GM18951 (cell line): ENCODE measurements at regions of chr16 and their contacts with region 1.

Region 1: GRCh38 chr16:75110637-75111513 is 5.7 kb downstream of the LDHD start:
- POLR2A ChIP-seq: no peak

Region 2: GRCh38 chr16:74709441-74709877 is 401.4 kb before region 1 on chr16:
- in situ Hi-C with region 1: loop called (anchors 25 kb)
- POLR2A ChIP-seq: no peak

Region 3: DNA sequence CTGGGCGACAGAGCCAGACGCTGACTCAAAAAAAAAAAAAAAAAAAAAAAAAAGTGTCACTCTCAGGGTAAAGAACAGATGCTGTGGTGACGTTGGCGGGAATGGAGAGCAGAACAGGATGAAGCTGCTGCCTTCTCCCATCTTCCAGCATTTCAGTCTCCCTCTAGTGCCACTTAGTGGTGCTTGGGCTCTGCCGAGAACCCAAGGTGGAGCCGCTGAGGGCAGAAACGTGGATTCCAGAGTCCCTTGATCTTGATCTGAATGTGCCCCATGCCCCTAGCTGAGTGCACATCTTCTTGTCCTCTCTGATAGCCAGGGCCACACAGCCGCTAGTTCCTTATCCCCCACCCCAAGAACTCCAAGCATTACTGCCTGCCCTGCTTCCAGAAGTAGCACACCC is 293.0 kb before region 1 on chr16:
- in situ Hi-C with region 1: no loop called
- POLR2A ChIP-seq: no peak

Region 4: DNA sequence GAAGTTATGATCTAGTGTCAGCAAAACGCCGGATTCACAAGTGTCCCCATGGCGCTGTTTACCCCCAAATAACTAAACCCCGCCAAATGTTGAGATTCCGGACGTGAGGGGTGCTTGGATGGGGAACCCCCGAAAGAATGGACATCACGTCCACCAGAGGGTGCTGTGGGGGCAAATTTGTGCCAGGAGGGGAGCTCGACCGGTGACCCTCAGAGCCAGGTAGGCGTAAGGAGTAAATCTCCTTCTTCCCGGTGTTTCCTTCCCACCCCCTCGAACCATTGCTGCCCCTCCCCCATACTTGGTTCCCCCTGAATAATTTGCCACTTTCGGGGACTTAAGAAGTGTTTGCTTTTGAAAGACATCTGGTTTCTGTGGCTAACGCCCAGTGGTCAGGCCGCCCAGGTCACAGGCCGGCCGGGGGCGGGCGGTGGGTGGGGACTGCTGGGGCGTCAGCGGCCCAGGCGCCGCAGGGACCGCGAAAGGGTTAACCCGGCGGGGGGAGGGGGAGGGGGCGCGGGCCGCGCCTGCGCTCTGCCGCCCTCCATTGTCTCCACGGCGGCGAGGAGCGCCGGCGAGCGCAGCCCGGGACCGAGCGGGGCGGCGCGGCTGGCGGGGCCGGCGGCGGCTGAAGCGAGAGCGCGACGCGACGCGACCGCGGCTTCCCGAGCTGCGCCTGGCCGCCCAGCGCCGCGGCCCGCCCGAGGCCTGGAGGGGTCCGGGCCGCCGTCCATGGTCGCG is 112.2 kb before region 1 on chr16 and contains the start of gene ZNRF1:
- in situ Hi-C with region 1: loop called (anchors 10 kb)
- POLR2A ChIP-seq: peak; percentile 62

Region 5: DNA sequence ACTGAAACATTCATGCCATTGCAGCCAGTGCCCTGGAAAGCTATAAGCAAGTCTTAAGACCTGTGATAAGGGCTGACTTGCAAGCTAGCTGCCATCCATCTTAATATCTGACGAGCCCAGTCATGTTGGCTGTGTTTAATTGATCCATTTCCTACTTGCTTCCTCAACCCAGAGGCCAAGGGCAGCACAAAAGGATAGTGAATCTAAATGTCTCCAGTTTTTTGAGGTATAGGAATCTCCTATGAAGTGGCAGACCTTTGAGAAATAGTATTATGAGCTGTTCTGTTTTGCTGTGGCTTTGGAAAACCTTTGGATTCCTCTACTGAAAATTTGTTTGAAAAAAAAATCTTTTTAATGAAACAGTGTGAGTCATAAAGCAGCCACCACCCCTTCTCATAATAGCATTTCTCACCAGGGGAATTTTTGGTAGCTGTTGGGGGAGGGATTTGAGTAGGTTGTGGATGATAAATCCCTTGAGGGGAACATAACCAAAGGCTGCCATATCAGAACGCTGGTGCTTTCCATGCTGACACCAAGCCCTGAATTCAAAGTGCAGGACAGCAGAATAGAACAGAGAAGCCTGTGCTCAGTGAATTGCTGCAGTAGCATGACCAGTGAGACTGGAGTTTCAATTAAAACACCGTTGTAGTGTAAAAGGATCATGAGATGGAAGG is 99.1 kb before region 1 on chr16:
- in situ Hi-C with region 1: loop called (anchors 5 kb)
- POLR2A ChIP-seq: peak; percentile 42

Region 6: DNA sequence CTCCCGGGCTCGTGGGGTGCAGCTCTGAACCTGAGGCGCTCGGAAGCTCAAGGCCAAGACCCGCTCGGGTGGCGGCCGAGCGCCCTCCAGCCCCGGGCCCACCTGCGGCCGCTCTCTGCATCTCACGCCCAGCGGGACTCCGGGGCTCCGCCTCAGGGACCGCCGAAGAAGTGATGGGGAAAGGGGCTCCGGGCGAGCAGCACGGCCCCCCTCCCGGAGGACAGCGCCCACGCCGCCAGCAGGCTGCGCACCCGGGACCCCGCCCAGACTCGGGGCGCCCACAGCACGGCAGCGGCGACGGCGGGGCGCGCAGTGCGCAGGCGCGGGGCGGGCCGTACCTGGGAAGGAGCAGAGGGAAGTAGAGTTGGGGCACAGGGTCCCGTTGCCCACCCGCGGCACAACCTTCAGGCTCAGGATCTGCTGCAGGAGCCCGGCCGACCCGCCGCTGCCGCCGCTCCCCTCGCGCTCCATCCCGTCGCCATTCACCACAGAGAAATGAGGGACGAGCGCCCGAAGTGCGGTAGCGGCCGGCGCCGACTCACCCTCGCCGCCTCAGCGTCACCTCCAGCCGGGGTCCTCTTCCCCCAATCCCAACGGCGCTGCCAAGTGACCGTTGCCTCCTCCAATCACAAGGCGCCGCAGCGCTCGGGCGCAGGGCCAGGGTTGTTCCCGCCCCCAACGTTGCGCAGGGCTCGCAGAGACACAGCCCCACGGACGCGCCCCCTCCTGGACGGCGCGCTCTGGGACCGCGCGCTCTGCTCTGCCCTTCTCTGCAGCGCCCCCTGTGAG is 353.4 kb after region 1 on chr16 and contains the start of gene TMEM170A:
- in situ Hi-C with region 1: no loop called
- POLR2A ChIP-seq: peak; percentile 99